RWPE1 (cell line): ENCODE measurements at regions of chr1 and their contacts with region 1.

Region 1: GRCh38 chr1:156104065-156104810 is 10.3 kb upstream of the LMNA start:
- DNase-seq: peak; percentile 94
- H3K27ac ChIP-seq: peak overlapping the region; percentile 98
- CTCF ChIP-seq: no peak

Region 2: DNA sequence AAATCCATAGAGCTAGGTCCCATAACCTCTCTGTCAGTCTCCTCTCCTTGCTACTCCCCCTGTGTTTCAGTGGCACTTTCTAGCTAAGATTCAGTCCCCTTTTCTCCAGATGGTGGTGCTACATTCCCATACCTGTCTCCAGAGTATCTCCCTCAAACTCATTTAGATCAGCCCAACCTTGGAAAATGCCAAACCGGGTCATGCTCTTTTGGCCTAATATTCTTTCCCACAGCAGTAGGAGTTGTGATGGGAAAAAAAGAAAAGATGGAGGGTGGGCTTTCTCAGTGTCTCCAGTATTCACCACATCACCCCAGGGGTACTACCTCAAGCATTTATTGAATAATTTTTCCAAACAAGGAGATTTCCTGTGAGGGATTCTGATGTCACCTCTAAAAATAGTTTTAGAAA is 166.0 kb before region 1 on chr1:
- CTCF ChIA-PET with region 1: no interaction called
- POLR2A ChIA-PET with region 1: interaction called, 13 read pairs
- DNase-seq: peak; percentile 64
- H3K27ac ChIP-seq: no peak overlapping the region
- CTCF ChIP-seq: peak; percentile 79

Region 3: DNA sequence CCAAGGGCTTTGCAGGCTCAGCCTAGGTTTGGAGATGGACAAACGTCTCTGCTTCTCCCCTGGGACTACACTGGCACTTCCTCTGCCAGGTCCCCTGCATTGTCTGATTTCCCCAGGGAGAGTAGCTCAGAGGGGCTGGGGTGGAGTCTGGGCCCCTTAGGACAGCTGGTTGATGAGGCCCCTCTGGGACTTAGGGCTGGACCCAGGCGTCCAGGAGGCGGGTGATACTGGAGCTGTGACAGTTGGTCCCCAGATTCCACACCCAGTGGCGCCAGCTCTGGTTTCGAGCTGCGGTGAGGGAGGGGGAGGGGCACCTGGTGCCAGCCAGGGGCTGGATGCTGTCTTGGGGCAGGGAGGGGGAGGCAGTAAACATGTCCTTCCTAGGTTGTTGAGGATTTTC is 14.5 kb before region 1 on chr1:
- CTCF ChIA-PET with region 1: no interaction called
- POLR2A ChIA-PET with region 1: no interaction called
- DNase-seq: no peak
- H3K27ac ChIP-seq: peak overlapping the region; percentile 18; the same call in 1 of the 2 replicates
- CTCF ChIP-seq: no peak

Region 4: GRCh38 chr1:156114101-156114916 is 10.1 kb after region 1 on chr1 and contains the start of gene LMNA:
- CTCF ChIA-PET with region 1: no interaction called
- POLR2A ChIA-PET with region 1: interaction called, 10 read pairs
- DNase-seq: peak; percentile 98
- H3K27ac ChIP-seq: peak within 1 kb of the TSS; percentile 100
- CTCF ChIP-seq: no peak

Region 5: DNA sequence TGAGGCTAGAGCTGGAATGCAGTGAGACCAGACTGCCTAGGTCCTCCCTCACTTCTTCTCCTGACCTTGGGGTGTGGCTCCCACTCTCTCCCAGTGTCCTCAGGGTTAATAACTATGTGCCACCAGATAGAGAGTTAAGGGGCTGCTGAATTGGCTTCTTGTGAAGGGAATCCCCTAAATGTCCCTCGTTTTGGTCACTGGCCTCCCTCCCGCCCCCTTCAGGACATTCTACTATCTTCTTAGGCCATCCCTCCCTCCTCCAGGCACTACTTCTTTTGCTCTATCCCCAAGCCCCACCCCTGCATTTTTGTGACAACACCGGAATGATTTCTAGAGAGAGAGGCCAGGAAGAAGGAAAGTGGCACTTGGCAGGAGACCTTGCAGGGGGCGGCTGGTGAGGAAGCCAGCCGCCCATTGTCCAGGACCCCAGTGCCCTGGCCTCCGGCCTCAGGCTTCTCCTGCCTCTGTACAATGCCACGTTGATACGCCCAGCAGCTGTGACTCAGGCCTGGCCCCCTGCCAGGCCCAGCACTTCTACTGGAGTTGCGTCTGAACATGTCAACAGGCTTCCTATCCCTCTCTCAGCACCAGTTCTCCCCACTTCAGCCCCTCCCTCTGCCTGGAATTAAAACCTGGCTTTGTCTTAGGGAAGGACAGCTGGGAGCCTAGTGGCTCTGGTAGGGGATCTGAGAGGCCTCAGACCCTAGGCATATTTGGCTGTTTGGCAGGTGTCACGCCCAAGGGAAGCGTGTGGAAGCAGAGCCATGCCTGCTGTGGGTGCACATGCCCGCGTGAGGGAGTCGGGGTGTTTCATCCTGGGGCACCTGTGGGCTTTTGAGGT is 19.3 kb after region 1 on chr1:
- CTCF ChIA-PET with region 1: interaction called, 11 read pairs
- POLR2A ChIA-PET with region 1: no interaction called
- DNase-seq: peak; percentile 79
- H3K27ac ChIP-seq: peak overlapping the region; percentile 100
- CTCF ChIP-seq: peak; percentile 18; the same call in 1 of the 2 replicates

Region 6: GRCh38 chr1:156129706-156130581 is 25.7 kb after region 1 on chr1:
- CTCF ChIA-PET with region 1: interaction called, 20 read pairs
- POLR2A ChIA-PET with region 1: interaction called, 5 read pairs
- DNase-seq: peak; percentile 90
- H3K27ac ChIP-seq: peak overlapping the region; percentile 100
- CTCF ChIP-seq: peak; percentile 96